Calu3 (cell line): ENCODE measurements at regions of chr6 and their contacts with region 1.

Region 1: GRCh38 chr6:154491567-154492443 is 18.7 kb downstream of the CNKSR3 start:
- DNase-seq: no peak
- H3K4me3 Mint-ChIP-seq: no peak overlapping the region
- H3K27ac Mint-ChIP-seq: no peak overlapping the region
- H3K4me1 Mint-ChIP-seq: no peaks in the 10 kb centered on the region
- H3K27me3 Mint-ChIP-seq: no peaks in the 10 kb centered on the region
- CTCF ChIP-seq: no peak

Region 2: DNA sequence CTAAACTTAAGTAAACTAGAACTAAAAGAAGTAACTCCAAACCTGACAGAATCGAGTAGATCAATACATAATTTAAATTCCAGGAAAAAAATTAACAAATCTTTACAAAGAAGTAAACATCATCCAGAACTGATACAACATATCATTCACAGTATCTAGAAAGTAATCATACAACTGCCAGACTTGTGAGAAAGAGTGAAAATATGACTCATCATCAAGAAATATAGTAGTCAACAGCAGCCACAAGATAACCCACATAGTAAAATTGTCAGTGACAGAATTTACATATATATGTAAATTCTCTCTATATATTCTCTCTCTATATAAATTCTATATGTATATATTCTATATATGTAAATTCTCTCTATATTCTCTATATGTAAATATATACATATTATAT is 1117.9 kb before region 1 on chr6:
- CTCF ChIA-PET with region 1: interaction called, 14 read pairs
- intact Hi-C with region 1: no loop called
- DNase-seq: no peak
- H3K4me3 Mint-ChIP-seq: no peak overlapping the region
- H3K27ac Mint-ChIP-seq: no peak overlapping the region
- H3K4me1 Mint-ChIP-seq: no peaks in the 10 kb centered on the region
- H3K27me3 Mint-ChIP-seq: no peaks in the 10 kb centered on the region
- CTCF ChIP-seq: no peak

Region 3: GRCh38 chr6:154213782-154214181 is 278.0 kb before region 1 on chr6:
- CTCF ChIA-PET with region 1: no interaction called
- intact Hi-C with region 1: no loop called
- DNase-seq: no peak
- H3K4me3 Mint-ChIP-seq: no peak overlapping the region
- H3K27ac Mint-ChIP-seq: no peak overlapping the region
- H3K4me1 Mint-ChIP-seq: no peaks in the 10 kb centered on the region
- H3K27me3 Mint-ChIP-seq: peaks cover 1% of the 10 kb centered on the region
- CTCF ChIP-seq: no peak